Prostate gland (tissue), 2 donors: ENCODE measurements at regions of chr5 and their contacts with region 1.

Region 1: DNA sequence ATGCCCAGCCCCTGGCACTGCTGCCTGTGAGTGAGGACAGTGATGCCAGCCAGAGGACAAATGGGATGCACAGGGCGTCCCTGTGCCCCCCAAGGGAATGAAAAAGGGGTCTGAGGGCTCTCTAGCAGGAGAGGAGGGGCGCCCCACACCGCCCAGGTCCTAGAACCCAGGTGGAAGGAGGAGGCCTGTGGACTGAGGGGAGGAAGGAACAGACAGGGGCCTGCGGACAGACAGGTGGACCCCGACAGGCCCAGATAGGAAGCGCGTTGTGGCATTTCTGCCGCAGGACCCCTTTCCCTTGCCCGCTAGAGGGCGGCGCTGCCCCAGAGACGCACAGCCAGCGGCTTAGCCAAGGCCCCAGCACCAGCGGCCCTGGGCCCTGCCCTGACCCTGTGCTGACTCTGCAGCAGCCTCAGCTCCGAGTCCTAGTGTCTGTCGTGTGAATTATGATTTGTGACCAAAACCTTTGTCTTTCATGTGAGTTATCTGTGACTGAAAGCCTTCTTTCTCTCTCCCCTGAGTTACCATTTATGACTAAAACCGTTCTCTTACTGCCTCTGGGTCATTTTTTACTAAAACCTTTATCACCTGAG is 30.7 kb downstream of the TRIP13 start:
- DNase-seq: peak; percentile 64
- H3K4me3 ChIP-seq: no peak overlapping the region
- H3K27ac ChIP-seq: no peak overlapping the region
- H3K4me1 ChIP-seq: no peaks in the 10 kb centered on the region
- H3K27me3 ChIP-seq: no peaks in the 10 kb centered on the region
- CTCF ChIP-seq: peak; percentile 66 to 87 (median 74)
- POLR2A ChIP-seq: no peak

Region 2: DNA sequence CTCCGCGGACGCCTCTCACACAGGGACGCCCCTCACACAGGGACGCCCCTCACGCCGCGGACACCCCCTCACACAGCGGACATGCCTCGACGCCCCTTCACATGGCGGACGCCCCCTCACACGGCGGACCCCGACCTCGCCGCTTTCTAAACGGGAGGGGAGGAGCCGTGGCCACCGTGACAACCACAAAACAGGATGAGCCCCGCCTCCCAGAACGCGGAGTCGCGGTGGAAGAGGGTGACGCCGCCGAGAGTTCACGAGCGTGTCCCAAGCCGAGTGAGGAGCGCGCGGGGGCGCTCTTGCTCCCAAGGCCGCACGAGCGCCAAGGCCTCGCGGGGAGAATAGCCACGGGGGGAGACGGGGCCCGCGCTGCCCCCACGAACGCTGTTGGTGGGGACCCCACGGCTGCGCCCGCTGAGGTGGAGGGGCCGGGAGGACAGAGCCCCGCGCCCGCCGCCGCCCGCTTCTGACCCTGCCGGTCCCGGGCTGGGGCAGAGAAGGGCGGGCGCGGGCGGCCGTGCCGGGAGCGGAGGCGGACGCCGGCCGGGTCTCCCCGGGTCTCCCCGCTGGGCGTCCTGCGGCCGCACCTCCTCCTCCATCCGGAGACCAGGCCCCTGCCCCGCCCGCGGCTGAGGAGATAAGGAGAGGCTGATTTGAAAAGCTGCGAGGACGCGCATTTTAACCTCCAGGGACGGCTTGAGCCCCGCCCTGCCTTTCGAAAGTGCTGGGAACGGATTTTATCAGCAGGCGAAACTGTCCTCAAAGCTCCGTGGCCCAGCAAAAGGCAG is 81.3 kb after region 1 on chr5:
- intact Hi-C with region 1: loop called (anchors 5 kb)
- DNase-seq: peak; percentile 56
- H3K4me3 ChIP-seq: peak overlapping the region; percentile 42 to 45
- H3K27ac ChIP-seq: peak overlapping the region; percentile 17 to 39
- H3K4me1 ChIP-seq: peaks cover 7% of the 10 kb centered on the region
- H3K27me3 ChIP-seq: no peaks in the 10 kb centered on the region
- CTCF ChIP-seq: peak in 2 of 4 experiments; percentile 34 to 41
- POLR2A ChIP-seq: no peak

Region 3: GRCh38 chr5:1140171-1140817 is 216.9 kb after region 1 on chr5:
- intact Hi-C with region 1: loop called (anchors 5 kb)
- DNase-seq: peak; percentile 81
- H3K4me3 ChIP-seq: no peak overlapping the region
- H3K27ac ChIP-seq: no peak overlapping the region
- H3K4me1 ChIP-seq: peaks cover 3% of the 10 kb centered on the region
- H3K27me3 ChIP-seq: no peaks in the 10 kb centered on the region
- CTCF ChIP-seq: peak; percentile 73 to 96 (median 91)
- POLR2A ChIP-seq: no peak

Region 4: GRCh38 chr5:1163879-1164278 is 240.5 kb after region 1 on chr5:
- intact Hi-C with region 1: no loop called
- DNase-seq: no peak
- H3K4me3 ChIP-seq: no peak overlapping the region
- H3K27ac ChIP-seq: no peak overlapping the region
- H3K4me1 ChIP-seq: peaks cover 4% of the 10 kb centered on the region
- H3K27me3 ChIP-seq: no peaks in the 10 kb centered on the region
- CTCF ChIP-seq: no peak
- POLR2A ChIP-seq: no peak

Region 5: GRCh38 chr5:1174122-1174936 is 251.0 kb after region 1 on chr5:
- intact Hi-C with region 1: loop called (anchors 10 kb)
- DNase-seq: peak; percentile 61
- H3K4me3 ChIP-seq: no peak overlapping the region
- H3K27ac ChIP-seq: no peak overlapping the region
- H3K4me1 ChIP-seq: no peaks in the 10 kb centered on the region
- H3K27me3 ChIP-seq: no peaks in the 10 kb centered on the region
- CTCF ChIP-seq: peak; percentile 56 to 85 (median 78)
- POLR2A ChIP-seq: no peak